ENCODE measurements at regions of chr14 and their contacts with region 1.

Region 1: DNA sequence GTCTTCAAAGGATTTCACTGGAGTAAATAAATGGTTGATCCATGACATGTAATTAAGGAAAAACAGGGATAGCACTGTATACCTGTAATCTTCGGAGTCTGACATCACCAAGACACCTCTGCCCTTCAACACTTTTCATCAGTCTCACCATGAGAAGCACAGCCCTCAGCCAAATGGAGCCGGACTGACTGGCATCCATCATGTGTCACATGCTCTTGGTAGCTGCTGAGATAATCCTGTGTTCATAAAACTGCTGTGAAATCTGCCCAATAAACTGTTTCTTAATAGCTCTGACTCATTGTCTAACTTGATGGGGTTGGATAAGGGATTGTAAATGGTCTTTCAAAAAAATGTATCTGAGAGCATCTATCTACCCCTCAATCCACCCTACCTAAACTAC is 33.7 kb downstream of the KCNH5 start:
- DNase-seq: no peak
- ATAC-seq: no peak

Region 2: GRCh38 chr14:62313212-62313611 is 698.4 kb before region 1 on chr14:
- intact Hi-C with region 1: loop called (anchors 5 kb)
- DNase-seq: no peak
- ATAC-seq: no peak